ENCODE measurements at regions of chr9 and their contacts with region 1.

Region 1: GRCh38 chr9:69421908-69422801 is 97.1 kb downstream of the ENTREP1 start:
- DNase-seq: peak; percentile 38 to 74
- H3K4me3 ChIP-seq: no peak overlapping the region
- H3K27ac ChIP-seq: no peak overlapping the region
- H3K4me1 ChIP-seq: no peaks in the 10 kb centered on the region
- H3K27me3 ChIP-seq: no peaks in the 10 kb centered on the region
- CTCF ChIP-seq: peak; percentile 38 to 93 (median 77)
- EP300 ChIP-seq: no peak
- POLR2A ChIP-seq: no peak
- RAD21 ChIP-seq: peak; percentile 99

Region 2: DNA sequence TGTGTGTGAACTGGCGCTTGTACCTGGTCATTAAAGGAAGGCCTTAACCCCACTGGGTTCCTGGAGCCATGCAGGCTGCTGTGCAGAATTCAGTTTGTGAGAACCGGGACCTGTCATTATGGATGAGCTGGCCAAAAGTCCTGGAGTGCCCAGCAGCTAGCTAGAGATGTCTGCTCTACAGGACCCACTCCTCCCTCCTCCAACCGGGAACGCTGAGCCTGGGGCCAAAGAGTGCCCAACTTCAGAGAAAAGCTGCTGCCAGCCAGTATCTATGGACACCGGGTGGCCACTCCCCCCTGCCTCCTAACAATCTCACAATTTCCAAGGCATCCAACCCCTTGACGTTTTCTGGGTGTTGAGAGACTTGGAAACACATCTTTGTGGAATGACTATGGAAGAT is 95.9 kb before region 1 on chr9:
- CTCF ChIA-PET with region 1: no interaction called
- POLR2A ChIA-PET with region 1: no interaction called
- DNase-seq: no peak
- H3K4me3 ChIP-seq: peak overlapping the region; percentile 56 to 80 (median 59); a peak in 7 of 8 replicates
- H3K27ac ChIP-seq: no peak overlapping the region
- H3K4me1 ChIP-seq: peaks cover 0 to 5% (median 4%) of the 10 kb centered on the region in 4 experiments; a peak in 5 of 7 replicates
- H3K27me3 ChIP-seq: peaks cover 0 to 17% (median 6%) of the 10 kb centered on the region in 4 experiments; a peak in 5 of 7 replicates
- CTCF ChIP-seq: no peak
- EP300 ChIP-seq: no peak
- POLR2A ChIP-seq: no peak
- RAD21 ChIP-seq: no peak

Region 3: GRCh38 chr9:69433392-69433791 is 11.2 kb after region 1 on chr9:
- CTCF ChIA-PET with region 1: interaction called, 26 read pairs
- POLR2A ChIA-PET with region 1: interaction called, 3 read pairs
- DNase-seq: no peak
- H3K4me3 ChIP-seq: no peak overlapping the region
- H3K27ac ChIP-seq: no peak overlapping the region
- H3K4me1 ChIP-seq: no peaks in the 10 kb centered on the region
- H3K27me3 ChIP-seq: no peaks in the 10 kb centered on the region
- CTCF ChIP-seq: no peak
- EP300 ChIP-seq: no peak
- POLR2A ChIP-seq: no peak
- RAD21 ChIP-seq: no peak

Region 4: GRCh38 chr9:69444021-69444420 is 21.9 kb after region 1 on chr9:
- CTCF ChIA-PET with region 1: interaction called, 14 read pairs
- POLR2A ChIA-PET with region 1: no interaction called
- DNase-seq: no peak
- H3K4me3 ChIP-seq: no peak overlapping the region
- H3K27ac ChIP-seq: no peak overlapping the region
- H3K4me1 ChIP-seq: no peaks in the 10 kb centered on the region; a peak in 2 of 7 replicates
- H3K27me3 ChIP-seq: no peaks in the 10 kb centered on the region
- CTCF ChIP-seq: no peak
- EP300 ChIP-seq: no peak
- POLR2A ChIP-seq: no peak
- RAD21 ChIP-seq: no peak

Region 5: GRCh38 chr9:69513141-69513820 is 91.1 kb after region 1 on chr9:
- CTCF ChIA-PET with region 1: interaction called, 12 read pairs
- POLR2A ChIA-PET with region 1: no interaction called
- DNase-seq: no peak
- H3K4me3 ChIP-seq: no peak overlapping the region
- H3K27ac ChIP-seq: no peak overlapping the region
- H3K4me1 ChIP-seq: peaks cover 0 to 6% (median 0%) of the 10 kb centered on the region in 4 experiments; a peak in 1 of 7 replicates
- H3K27me3 ChIP-seq: no peaks in the 10 kb centered on the region
- CTCF ChIP-seq: no peak
- EP300 ChIP-seq: no peak
- POLR2A ChIP-seq: no peak
- RAD21 ChIP-seq: no peak

Region 6: DNA sequence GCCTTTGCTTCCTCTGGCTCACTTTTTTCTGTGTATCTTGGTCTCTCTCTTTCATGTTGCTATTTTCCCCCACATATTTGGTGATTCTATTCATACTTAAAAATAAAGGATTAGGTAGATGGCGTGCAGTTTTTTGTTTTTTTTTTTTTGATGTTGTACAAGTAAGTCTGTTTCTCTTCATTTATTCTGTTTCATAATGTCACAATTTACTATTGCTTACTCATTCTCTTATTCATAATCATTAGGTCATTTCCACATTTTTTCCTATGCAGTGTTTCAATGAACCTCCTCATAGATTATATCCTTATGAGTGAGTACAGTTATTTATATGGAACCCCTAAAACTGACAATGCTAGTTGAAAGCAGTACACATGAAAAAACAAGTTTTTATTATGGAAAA is 113.8 kb after region 1 on chr9:
- CTCF ChIA-PET with region 1: interaction called, 11 read pairs
- POLR2A ChIA-PET with region 1: no interaction called
- DNase-seq: no peak
- H3K4me3 ChIP-seq: no peak overlapping the region
- H3K27ac ChIP-seq: no peak overlapping the region
- H3K4me1 ChIP-seq: no peaks in the 10 kb centered on the region
- H3K27me3 ChIP-seq: no peaks in the 10 kb centered on the region
- CTCF ChIP-seq: no peak
- EP300 ChIP-seq: no peak
- POLR2A ChIP-seq: no peak
- RAD21 ChIP-seq: no peak

Region 7: DNA sequence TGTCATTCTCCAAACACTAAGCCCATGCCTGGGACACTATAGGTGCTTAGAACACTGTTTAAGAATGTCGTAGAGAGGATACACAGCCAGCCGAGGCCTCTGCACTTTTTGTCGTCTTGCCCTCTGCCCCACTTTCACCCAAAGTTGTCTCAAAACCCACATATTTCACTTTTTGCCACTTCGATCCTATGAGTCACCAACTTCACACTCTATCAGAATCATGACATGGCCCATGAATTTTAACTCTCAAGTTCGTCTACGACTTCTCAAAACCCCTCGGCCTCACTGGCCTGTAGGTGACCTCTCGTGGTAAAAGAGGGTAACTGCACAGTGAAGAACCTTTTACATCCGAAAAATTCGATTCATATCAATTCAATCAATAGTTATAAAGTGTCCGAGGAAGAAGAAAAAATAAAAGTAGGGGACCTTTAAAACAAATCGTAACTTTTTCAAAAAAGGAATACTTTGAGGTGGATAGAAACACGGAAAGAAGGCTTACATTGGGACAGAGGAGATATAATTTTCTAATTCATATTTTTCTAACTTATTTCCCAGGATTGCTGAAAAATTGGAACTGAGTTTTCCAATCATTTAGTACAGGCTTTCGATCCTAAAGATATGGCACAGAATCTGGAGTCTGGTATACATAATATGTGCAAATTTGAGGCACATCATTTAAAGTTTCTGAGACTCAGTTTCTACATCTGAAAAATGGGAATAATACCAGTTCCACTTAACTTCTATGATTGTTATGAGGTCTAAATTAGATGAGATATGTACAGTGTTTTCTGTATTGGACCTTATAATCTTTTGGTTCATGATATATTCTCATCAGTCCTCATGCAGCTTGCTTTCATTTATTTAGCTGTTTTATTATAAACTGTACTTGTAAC is 127.4 kb after region 1 on chr9:
- CTCF ChIA-PET with region 1: interaction called, 246 read pairs
- POLR2A ChIA-PET with region 1: interaction called, 3 read pairs
- DNase-seq: no peak
- H3K4me3 ChIP-seq: no peak overlapping the region
- H3K27ac ChIP-seq: no peak overlapping the region
- H3K4me1 ChIP-seq: peaks cover 0 to 3% (median 0%) of the 10 kb centered on the region in 4 experiments; a peak in 1 of 7 replicates
- H3K27me3 ChIP-seq: no peaks in the 10 kb centered on the region; a peak in 1 of 7 replicates
- CTCF ChIP-seq: peak; percentile 49 to 83 (median 75)
- EP300 ChIP-seq: no peak
- POLR2A ChIP-seq: no peak
- RAD21 ChIP-seq: peak; percentile 90 to 91

Measured in H1 (cell line).